ENCODE measurements at regions of chr7 and their contacts with region 1.

Region 1: DNA sequence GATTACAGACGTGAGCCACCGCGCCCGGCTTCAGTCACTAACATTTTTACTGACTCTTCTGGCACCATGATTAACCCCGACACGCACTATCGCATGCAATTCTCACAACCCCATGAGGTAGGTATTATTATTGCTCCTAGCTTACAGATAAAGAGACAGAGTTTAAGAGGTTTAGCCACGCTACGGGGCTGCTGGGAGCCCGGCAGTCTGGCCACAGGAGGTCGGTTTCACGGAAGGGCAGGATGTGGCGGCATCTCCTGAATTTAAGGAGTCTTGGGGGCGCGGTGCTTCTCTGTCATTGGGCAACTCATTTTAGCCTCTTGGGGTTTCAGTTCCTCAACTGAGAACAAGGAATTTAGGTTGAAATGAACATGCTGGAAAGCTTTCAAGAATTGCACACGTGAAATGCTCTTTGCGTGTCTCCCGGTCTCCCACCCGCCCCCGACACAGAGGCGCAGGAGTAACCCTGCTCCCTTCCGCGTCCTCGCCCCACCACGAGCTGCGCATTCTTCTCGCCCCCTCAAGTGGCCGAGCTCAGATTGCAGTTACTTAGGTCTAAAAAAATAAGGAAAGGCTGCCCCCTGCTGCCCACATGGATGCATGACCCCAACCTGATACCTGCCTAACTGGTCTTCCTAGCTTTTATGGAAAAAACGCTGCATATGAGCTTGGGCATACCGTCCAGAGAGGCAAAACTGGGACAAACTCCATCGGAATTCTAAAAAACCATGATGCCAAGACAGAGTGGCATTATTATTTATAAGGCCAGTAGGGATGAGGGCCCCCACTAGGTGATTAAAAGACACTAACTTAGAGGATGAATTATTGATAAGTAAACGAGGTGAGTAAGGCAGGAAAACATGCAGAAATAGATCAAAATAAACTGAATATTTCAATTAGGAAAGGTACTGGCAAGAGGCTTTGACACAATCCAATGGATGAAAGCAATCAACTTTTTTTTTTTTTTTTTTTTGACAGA is 12.4 kb downstream of the PRSS2 start:
- DNase-seq: peak; percentile 82
- ATAC-seq: peak; percentile 92
- H3K4me3 ChIP-seq: peak overlapping the region in 1 of 2 experiments; percentile 23; a peak in 2 of 4 replicates
- H3K27ac ChIP-seq: no peak overlapping the region
- H3K4me1 ChIP-seq: no peaks in the 10 kb centered on the region
- H3K27me3 ChIP-seq: peaks cover 6% of the 10 kb centered on the region; the same call in 1 of the 2 replicates
- CTCF ChIP-seq: peak; percentile 91

Region 2: DNA sequence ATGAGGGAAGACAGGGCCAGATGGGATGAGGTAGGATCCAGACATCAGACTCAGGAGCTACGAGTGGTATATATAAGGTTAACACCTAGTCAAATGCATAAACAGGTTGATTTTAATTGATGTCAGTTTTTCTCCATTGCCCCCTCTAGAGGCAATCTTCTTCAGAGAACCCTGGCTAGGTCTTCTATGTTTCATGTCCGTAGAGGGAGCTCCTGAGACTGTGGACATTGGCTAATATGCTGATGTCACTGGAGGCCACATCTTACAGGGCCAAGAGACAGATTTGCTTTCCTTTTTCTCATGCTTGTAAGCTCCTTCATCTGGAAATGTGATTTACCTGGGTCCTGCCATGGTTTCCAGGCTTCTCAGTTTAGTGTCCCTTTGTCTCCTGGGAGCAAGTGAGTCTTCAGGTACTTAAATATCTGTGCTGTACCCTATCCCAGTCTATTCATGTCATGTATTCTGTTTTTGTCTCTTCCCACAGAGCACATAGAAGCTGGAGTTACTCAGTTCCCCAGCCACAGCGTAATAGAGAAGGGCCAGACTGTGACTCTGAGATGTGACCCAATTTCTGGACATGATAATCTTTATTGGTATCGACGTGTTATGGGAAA is 195.5 kb before region 1 on chr7:
- CTCF ChIA-PET with region 1: interaction called, 17 read pairs
- POLR2A ChIA-PET with region 1: no interaction called
- in situ Hi-C with region 1: no loop called
- intact Hi-C with region 1: no loop called
- DNase-seq: no peak
- ATAC-seq: peak; percentile 81
- H3K4me3 ChIP-seq: no peak overlapping the region
- H3K27ac ChIP-seq: no peak overlapping the region
- H3K4me1 ChIP-seq: peaks cover 5% of the 10 kb centered on the region
- H3K27me3 ChIP-seq: no peaks in the 10 kb centered on the region
- CTCF ChIP-seq: peak; percentile 69

Region 3: DNA sequence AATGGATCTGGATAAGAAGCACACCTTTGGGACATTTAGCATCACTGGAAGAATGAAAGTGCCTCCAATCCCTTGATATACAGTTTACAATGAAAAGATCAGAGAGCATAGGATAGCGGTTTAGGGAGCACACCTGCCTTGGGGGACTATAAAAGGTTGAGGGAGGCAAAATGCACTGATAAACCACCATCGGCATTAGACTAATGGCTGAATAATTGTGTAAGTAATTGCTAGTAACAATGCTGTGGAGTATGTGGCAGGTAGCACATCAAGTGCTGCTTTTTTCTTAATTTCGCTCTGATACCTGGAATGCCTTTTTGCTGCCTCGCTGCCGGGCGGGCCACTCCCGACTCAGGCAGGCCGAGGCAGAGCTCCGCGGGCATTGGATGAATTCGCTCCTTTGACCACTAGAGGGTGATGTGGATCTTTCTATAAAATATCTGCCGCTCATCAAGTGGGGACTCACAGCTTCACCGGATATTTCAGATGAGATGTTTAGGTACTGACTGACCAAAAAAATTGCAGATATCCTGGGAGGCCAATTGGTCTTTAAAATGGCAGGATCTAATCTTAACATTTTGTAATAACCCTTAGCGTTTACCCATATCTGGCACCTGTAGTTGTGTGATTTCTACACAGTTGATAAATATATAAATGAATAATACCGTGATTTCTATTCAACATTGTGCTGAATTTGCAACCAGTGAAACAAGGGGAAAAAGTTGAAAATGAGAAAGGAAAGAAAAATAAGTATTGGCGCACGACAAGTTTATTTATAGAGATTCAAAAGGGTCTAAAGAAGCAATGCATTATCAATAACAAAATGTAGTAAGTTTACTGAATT is 150.7 kb before region 1 on chr7:
- CTCF ChIA-PET with region 1: interaction called, 24 read pairs
- POLR2A ChIA-PET with region 1: no interaction called
- in situ Hi-C with region 1: no loop called
- intact Hi-C with region 1: loop called (anchors 1 kb)
- DNase-seq: peak; percentile 72
- ATAC-seq: peak; percentile 91
- H3K4me3 ChIP-seq: no peak overlapping the region
- H3K27ac ChIP-seq: no peak overlapping the region
- H3K4me1 ChIP-seq: no peaks in the 10 kb centered on the region
- H3K27me3 ChIP-seq: peaks cover 13% of the 10 kb centered on the region
- CTCF ChIP-seq: peak; percentile 83

Region 4: DNA sequence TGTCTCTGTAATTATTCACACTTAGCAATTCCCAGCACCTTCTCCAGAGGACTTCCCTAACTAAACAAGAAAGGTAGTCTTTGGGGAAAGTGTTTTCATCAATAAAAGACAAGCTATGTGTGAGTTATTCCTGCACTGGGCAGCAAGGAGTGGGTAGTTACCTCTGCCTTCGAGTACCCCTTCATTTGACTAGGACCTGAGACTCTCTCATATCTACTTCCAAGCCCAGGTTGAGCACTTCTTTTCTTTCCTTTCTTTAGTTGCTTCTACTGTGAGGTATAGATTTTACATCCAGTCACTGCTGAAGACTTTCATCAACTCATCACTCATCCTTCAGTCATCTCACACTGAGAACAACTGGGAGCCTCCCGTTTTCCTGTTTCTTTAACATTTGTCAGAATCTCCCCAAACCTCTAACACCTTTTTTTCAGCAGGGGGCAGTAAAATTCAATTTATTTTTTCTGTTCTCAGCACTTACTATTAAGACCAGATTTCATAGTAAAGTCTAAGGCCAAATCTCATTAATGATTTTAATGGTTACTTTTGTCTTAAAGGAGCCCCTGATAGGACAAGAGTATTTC is 114.0 kb before region 1 on chr7:
- CTCF ChIA-PET with region 1: no interaction called
- POLR2A ChIA-PET with region 1: no interaction called
- in situ Hi-C with region 1: no loop called
- intact Hi-C with region 1: loop called (anchors 2 kb)
- DNase-seq: no peak
- ATAC-seq: no peak
- H3K4me3 ChIP-seq: no peak overlapping the region
- H3K27ac ChIP-seq: no peak overlapping the region
- H3K4me1 ChIP-seq: no peaks in the 10 kb centered on the region
- H3K27me3 ChIP-seq: no peaks in the 10 kb centered on the region
- CTCF ChIP-seq: no peak; the same call in 1 of the 2 replicates

Region 5: DNA sequence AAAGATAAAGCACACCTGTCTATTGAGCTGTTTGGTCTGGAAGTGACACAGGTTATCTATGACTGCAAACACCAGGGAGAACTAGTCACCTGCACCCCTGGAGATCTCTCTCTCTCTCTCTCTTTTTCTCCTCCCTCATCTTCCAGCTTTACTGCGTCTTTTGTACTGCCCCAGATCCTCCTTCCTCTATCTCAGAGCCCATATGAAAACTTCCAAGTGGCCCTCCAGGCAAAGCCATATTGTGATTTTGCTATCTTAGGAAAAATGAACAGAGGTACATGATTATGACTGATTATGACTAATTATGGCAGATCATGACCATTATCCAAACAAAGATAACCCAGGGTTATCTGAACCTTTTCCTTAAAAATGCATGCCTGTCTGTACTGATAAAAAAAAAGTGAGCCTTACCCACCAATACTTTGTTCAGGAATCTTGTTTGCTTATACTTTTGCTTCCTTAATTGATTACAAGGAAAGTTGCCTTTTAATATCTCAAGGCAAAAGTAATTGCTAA is 59.1 kb after region 1 on chr7:
- CTCF ChIA-PET with region 1: no interaction called
- POLR2A ChIA-PET with region 1: no interaction called
- in situ Hi-C with region 1: no loop called
- intact Hi-C with region 1: no loop called
- DNase-seq: no peak
- ATAC-seq: no peak
- H3K4me3 ChIP-seq: no peak overlapping the region
- H3K27ac ChIP-seq: no peak overlapping the region
- H3K4me1 ChIP-seq: no peaks in the 10 kb centered on the region
- H3K27me3 ChIP-seq: peaks cover 2% of the 10 kb centered on the region; the same call in 1 of the 2 replicates
- CTCF ChIP-seq: no peak

Measured in Panc1 (cell line).